ENCODE measurements at regions of chr5 and their contacts with region 1.

Region 1: GRCh38 chr5:157253547-157253946 is 12.4 kb upstream of the CYFIP2 start:
- DNase-seq: no peak
- ATAC-seq: peak; percentile 89
- H3K4me3 ChIP-seq: no peak overlapping the region
- H3K27ac ChIP-seq: no peak overlapping the region
- H3K4me1 ChIP-seq: no peaks in the 10 kb centered on the region
- H3K27me3 ChIP-seq: no peaks in the 10 kb centered on the region

Region 2: GRCh38 chr5:157172403-157172802 is 81.1 kb before region 1 on chr5:
- intact Hi-C with region 1: no loop called
- DNase-seq: no peak
- ATAC-seq: no peak
- H3K4me3 ChIP-seq: no peak overlapping the region
- H3K27ac ChIP-seq: no peak overlapping the region
- H3K4me1 ChIP-seq: no peaks in the 10 kb centered on the region
- H3K27me3 ChIP-seq: no peaks in the 10 kb centered on the region

Region 3: DNA sequence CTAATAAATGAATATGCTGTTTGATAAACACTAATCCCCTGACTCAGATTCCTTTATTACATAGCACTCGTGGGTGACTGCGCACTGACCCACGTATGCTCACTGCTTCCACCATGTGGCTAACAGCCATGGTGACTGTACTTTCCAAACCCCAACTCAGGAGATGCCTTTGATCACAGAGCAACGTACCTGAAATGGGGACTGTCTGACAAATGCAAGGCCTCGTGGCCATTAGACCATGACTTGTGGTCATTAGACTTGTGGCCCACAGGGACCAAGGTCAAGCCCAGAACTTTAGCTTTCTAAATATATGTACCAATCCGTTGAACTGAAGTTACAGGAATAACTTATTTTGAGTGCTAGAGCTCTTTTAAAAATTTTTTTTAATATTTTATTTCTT is 58.9 kb after region 1 on chr5:
- intact Hi-C with region 1: loop called (anchors 2 to 5 kb)
- DNase-seq: peak in 1 of 2 donors; percentile 56
- ATAC-seq: no peak
- H3K4me3 ChIP-seq: no peak overlapping the region
- H3K27ac ChIP-seq: no peak overlapping the region
- H3K4me1 ChIP-seq: no peaks in the 10 kb centered on the region
- H3K27me3 ChIP-seq: no peaks in the 10 kb centered on the region